Breast epithelium (tissue), 4 donors: ENCODE measurements at regions of chr16 and their contacts with region 1.

Region 1: GRCh38 chr16:10447289-10447688 is 61.4 kb downstream of the ATF7IP2 start:
- DNase-seq: no peak
- H3K4me3 ChIP-seq: no peak overlapping the region
- H3K27ac ChIP-seq: no peak overlapping the region
- H3K4me1 ChIP-seq: no peaks in the 10 kb centered on the region
- H3K27me3 ChIP-seq: no peaks in the 10 kb centered on the region
- CTCF ChIP-seq: no peak
- POLR2A ChIP-seq: no peak

Region 2: GRCh38 chr16:11727796-11728543 is 1280.7 kb after region 1 on chr16:
- intact Hi-C with region 1: loop called (anchors 10 kb)
- DNase-seq: no peak
- H3K4me3 ChIP-seq: no peak overlapping the region
- H3K27ac ChIP-seq: peak overlapping the region in 1 of 2 donors; percentile 3
- H3K4me1 ChIP-seq: no peaks in the 10 kb centered on the region
- H3K27me3 ChIP-seq: no peaks in the 10 kb centered on the region
- CTCF ChIP-seq: no peak
- POLR2A ChIP-seq: no peak